Activated T-helper 2 cell treated with anti-CD3 and anti-CD28 coated beads, Interferon-gamma antibody, Interleukin-2, Interleukin-4, amounts not matched to agents 10 μg/mL and 5 μg/mL and 100 μg/mL, durations not matched to agents 14 hours and 24 hours and 36 hours (primary cell): ENCODE measurements at regions of chr7 and their contacts with region 1.

Region 1: DNA sequence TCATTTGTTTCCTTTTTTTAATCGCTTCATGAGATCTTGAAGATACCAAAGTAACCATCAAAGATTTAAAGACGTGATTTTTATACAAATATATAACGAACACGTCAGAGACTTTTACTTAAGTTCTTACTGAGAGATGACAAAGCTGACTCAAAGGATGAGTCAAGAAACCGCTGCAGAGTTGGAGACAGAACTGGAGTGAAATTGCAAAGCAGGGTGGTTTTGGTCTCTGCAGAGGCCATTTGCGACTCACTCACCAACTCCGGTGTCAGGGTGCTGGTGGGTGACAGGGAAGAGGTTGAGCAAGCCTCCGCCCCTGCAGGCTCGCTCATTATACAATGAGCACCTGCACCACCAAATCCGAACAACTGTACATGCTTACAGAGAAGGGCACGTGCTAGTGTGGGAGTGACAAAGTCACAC is 75.2 kb downstream of the DNAJB6 start:
- DNase-seq: no peak
- H3K4me3 Mint-ChIP-seq: no peak overlapping the region
- H3K27ac Mint-ChIP-seq: peak overlapping the region; percentile 83
- H3K4me1 Mint-ChIP-seq: peaks cover 11% of the 10 kb centered on the region
- H3K27me3 Mint-ChIP-seq: no peaks in the 10 kb centered on the region

Region 2: GRCh38 chr7:157570531-157571200 is 158.6 kb after region 1 on chr7:
- intact Hi-C with region 1: loop called (anchors 1 kb)
- DNase-seq: no peak
- H3K4me3 Mint-ChIP-seq: peak overlapping the region; percentile 23
- H3K27ac Mint-ChIP-seq: peak overlapping the region; percentile 54
- H3K4me1 Mint-ChIP-seq: peaks cover 60% of the 10 kb centered on the region
- H3K27me3 Mint-ChIP-seq: no peaks in the 10 kb centered on the region